ENCODE measurements at regions of chr10 and their contacts with region 1.

Region 1: DNA sequence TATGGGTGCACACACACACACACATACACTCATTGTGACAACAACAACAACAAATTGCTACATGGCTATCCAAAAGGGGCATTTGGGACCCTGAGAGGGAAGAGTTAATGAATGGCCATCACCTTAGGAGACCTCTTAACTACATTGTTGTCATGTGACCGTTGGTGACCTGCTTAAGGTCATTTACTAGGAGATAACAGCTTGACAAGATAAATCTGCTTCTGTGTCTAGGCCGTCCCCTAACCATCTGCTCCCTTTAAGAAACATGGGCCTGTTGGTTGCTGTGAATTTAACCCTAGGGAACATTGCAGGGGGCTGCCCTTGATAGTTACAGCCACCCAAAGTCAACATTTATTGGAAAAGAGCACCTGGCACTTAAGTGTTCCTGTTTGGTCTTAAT is 29.7 kb downstream of the C1QL3 start:
- DNase-seq: no peak
- ATAC-seq: peak in 1 of 4 donors; percentile 61
- H3K4me3 ChIP-seq: no peak overlapping the region
- H3K27ac ChIP-seq: no peak overlapping the region
- H3K4me1 ChIP-seq: no peaks in the 10 kb centered on the region
- H3K27me3 ChIP-seq: no peaks in the 10 kb centered on the region
- CTCF ChIP-seq: no peak

Region 2: GRCh38 chr10:16381083-16381482 is 110.8 kb before region 1 on chr10:
- intact Hi-C with region 1: loop called in 1 of 3 experiments (anchors 10 kb)
- DNase-seq: no peak
- ATAC-seq: peak in 2 of 4 donors; percentile 13 to 20
- H3K4me3 ChIP-seq: no peak overlapping the region
- H3K27ac ChIP-seq: no peak overlapping the region
- H3K4me1 ChIP-seq: no peaks in the 10 kb centered on the region
- H3K27me3 ChIP-seq: no peaks in the 10 kb centered on the region
- CTCF ChIP-seq: no peak